K562 (cell line): ENCODE measurements at regions of chr3 and their contacts with region 1.

Region 1: DNA sequence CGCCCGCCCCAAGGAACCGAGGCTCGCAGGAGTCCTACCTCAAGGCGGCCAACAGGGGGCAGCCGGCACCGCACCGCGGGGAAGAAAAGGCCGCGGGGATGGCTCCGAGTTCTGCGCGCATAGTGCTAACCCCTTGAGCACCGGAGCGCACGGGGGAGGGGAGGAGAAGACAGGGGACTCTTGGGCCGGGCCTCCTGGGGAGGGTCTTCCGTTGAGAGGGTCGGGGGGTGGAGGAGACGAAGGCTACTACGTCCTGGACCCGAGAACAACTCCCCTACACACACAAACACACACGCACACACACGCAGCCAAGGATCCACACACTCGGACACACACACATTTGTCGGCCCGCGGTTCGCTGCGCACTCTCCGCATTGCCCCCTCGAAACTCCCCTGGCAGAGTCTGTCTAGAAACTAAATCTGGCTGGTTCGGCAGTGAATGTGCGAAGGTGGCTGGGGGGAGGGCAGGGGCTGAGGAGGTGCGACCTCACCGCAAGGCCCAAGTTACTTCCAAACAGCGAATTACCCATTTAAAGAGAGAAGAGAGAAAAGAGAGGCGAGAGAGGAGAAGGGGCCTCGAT is 1.8 kb downstream of the WNT5A start:
- DNase-seq: peak; percentile 42 to 65 (median 65)
- ATAC-seq: peak; percentile 94
- H3K4me3 ChIP-seq: no peak overlapping the region
- H3K27ac ChIP-seq: no peak overlapping the region
- H3K4me1 ChIP-seq: peaks cover 0 to 3% of the 10 kb centered on the region in 2 experiments; a peak in 1 of 5 replicates
- H3K27me3 ChIP-seq: peaks cover 0 to 47% of the 10 kb centered on the region in 2 experiments; a peak in 2 of 5 replicates
- CTCF ChIP-seq: peak; percentile 25 to 60 (median 41); a peak in 4 of 6 replicates
- EP300 ChIP-seq: no peak
- POLR2A ChIP-seq: no peak
- RAD21 ChIP-seq: peak; percentile 21 to 24; a peak in 1 of 4 replicates

Region 2: GRCh38 chr3:55746808-55747413 is 261.6 kb after region 1 on chr3:
- CTCF ChIA-PET with region 1: no interaction called
- POLR2A ChIA-PET with region 1: no interaction called
- in situ Hi-C with region 1: no loop called
- intact Hi-C with region 1: loop called (anchors 10 kb)
- DNase-seq: no peak
- ATAC-seq: no peak
- H3K4me3 ChIP-seq: no peak overlapping the region
- H3K27ac ChIP-seq: no peak overlapping the region
- H3K4me1 ChIP-seq: no peaks in the 10 kb centered on the region
- H3K27me3 ChIP-seq: no peaks in the 10 kb centered on the region
- CTCF ChIP-seq: peak in 1 of 3 experiments; percentile 28; a peak in 2 of 6 replicates
- EP300 ChIP-seq: no peak
- POLR2A ChIP-seq: no peak
- RAD21 ChIP-seq: peak in 1 of 2 experiments; percentile 17; a peak in 1 of 4 replicates